ENCODE measurements at regions of chr9 and their contacts with region 1.

Region 1: DNA sequence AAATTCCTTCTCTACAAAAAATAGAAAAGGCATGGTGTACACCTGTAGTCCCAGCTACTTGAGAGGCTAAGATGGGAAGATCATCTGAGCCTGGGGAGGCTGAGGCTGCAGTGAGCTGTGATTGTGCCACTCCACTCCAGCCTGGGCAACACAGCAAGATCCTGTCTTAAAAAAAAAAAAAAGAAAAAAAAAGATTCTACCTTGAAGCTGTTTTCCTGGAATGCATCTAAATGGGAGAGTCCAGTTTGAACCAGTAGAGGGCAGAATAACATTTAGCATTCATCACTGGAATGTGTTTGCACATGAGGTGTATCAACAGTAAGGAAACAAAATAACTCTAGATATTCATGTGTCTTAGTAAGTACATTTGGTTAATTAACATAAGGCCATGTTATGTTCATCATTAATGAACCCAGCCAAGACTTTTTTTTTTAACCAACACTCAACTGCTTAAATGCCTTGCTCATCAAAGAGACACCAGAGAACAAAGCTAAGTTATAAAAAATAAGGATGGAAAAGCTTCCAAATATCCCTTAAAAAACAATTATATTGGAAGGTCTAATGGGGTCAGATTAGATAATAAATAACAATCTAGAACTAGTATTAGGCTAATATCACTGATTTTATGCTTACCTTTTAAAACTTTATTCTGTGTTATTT is 16.1 kb downstream of the IFNE start:
- DNase-seq: peak; percentile 88
- H3K4me3 ChIP-seq: no peak overlapping the region
- H3K27ac ChIP-seq: no peak overlapping the region
- H3K4me1 ChIP-seq: no peaks in the 10 kb centered on the region
- H3K27me3 ChIP-seq: no peaks in the 10 kb centered on the region
- CTCF ChIP-seq: peak; percentile 62 to 63
- POLR2A ChIP-seq: no peak

Region 2: GRCh38 chr9:21252721-21253547 is 213.1 kb before region 1 on chr9:
- CTCF ChIA-PET with region 1: interaction called, 13 read pairs
- POLR2A ChIA-PET with region 1: no interaction called
- dilution Hi-C with region 1: no loop called
- intact Hi-C with region 1: loop called (anchors 5 kb)
- DNase-seq: peak; percentile 79
- H3K4me3 ChIP-seq: no peak overlapping the region
- H3K27ac ChIP-seq: no peak overlapping the region
- H3K4me1 ChIP-seq: peaks cover 3% of the 10 kb centered on the region
- H3K27me3 ChIP-seq: peaks cover 34 to 51% of the 10 kb centered on the region in 2 experiments
- CTCF ChIP-seq: peak; percentile 29 to 48
- POLR2A ChIP-seq: no peak

Region 3: DNA sequence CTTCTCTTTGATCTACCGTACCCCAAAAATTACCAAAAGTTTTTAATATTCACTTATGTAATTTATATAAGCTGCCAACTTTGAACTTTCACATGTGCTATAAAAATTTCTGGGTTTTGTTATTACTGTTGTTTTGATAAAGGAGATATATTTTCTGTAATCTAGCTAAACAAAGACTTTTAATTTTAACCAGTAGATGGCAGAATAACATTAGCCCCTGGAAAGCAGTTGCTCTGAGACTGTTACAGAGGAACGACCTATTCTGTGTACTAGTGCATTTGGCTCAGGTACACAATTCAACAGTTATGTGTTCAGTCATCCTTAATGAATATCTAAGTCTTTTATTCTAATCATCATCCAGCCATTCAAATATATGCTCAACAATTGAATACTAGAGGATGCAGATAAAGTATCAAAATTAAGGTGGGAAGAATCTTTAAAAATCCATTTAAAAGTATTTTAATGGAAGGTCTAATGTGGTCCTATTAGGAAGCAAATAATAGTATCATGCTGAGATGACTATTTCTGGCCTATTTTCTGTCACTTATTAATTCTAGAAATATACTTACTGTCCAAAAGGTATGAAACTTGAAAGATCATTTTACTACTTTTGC is 139.4 kb before region 1 on chr9:
- CTCF ChIA-PET with region 1: interaction called, 10 read pairs
- POLR2A ChIA-PET with region 1: no interaction called
- dilution Hi-C with region 1: no loop called
- intact Hi-C with region 1: no loop called
- DNase-seq: peak; percentile 54
- H3K4me3 ChIP-seq: no peak overlapping the region
- H3K27ac ChIP-seq: no peak overlapping the region
- H3K4me1 ChIP-seq: peaks cover 15% of the 10 kb centered on the region
- H3K27me3 ChIP-seq: no peaks in the 10 kb centered on the region
- CTCF ChIP-seq: peak; percentile 33 to 46
- POLR2A ChIP-seq: no peak

Region 4: GRCh38 chr9:21504894-21505293 is 38.9 kb after region 1 on chr9:
- CTCF ChIA-PET with region 1: no interaction called
- POLR2A ChIA-PET with region 1: no interaction called
- dilution Hi-C with region 1: no loop called
- intact Hi-C with region 1: no loop called
- DNase-seq: no peak
- H3K4me3 ChIP-seq: no peak overlapping the region
- H3K27ac ChIP-seq: no peak overlapping the region
- H3K4me1 ChIP-seq: peaks cover 29% of the 10 kb centered on the region
- H3K27me3 ChIP-seq: no peaks in the 10 kb centered on the region
- CTCF ChIP-seq: no peak
- POLR2A ChIP-seq: no peak

Region 5: DNA sequence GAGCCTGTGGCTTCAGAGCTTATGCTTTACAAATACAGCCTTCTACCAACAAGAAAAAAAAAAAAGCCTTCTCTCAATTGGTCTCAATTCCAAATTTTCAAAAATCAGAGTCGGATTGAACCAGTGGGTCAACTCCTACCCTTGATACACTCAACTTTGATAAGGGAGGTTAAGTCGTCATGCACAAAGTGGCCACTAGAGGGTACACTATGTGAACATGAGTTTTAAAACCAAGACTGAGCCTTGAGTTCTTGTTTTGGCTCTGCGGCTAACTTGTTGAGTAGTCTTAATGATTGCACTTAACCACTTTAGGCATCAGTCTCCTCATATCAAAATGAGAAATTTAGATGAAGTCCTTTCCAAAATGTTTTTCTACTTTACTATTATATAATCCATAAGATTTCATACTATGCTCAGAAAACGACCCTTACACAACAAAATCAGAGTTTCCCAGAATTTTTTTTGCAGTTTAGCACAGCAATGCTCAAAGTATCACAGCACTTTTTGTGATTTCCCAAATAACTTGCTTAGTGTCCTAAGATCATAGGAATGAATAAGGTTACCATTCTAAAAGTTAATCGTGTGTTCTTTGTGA is 243.6 kb after region 1 on chr9:
- CTCF ChIA-PET with region 1: interaction called, 23 read pairs
- POLR2A ChIA-PET with region 1: no interaction called
- dilution Hi-C with region 1: no loop called
- intact Hi-C with region 1: loop called (anchors 1 kb)
- DNase-seq: peak; percentile 69
- H3K4me3 ChIP-seq: no peak overlapping the region
- H3K27ac ChIP-seq: no peak overlapping the region
- H3K4me1 ChIP-seq: no peaks in the 10 kb centered on the region
- H3K27me3 ChIP-seq: no peaks in the 10 kb centered on the region
- CTCF ChIP-seq: peak; percentile 67 to 74
- POLR2A ChIP-seq: no peak

Measured in endothelial cell of umbilical vein (primary cell).